ENCODE measurements at regions of chr2 and their contacts with region 1.

Region 1: DNA sequence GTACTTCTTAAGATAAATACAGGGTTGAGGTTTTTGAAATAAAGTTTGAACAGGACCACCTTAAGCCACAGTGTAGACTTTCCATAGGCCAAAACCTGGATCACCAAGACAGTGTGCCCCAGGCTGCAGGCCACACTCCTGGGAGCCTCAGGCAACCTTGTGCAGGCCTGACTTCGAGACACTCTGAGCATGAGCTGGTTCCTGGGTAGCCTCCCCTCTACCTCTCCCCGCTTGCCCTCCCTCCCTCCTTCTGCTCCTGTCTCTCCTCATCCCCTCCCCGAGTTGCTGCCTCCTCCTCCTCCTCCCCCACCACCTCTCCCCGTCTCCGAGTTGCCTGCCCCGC is 10.6 kb upstream of the PROC start:
- DNase-seq: no peak
- ATAC-seq: peak; percentile 57 to 73
- H3K4me3 ChIP-seq: no peak overlapping the region
- H3K27ac ChIP-seq: peak overlapping the region; percentile 97
- H3K4me1 ChIP-seq: peaks cover 66% of the 10 kb centered on the region
- CTCF ChIP-seq: no peak
- EP300 ChIP-seq: no peak
- POLR2A ChIP-seq: no peak
- RAD21 ChIP-seq: no peak

Region 2: GRCh38 chr2:127365211-127365643 is 42.4 kb before region 1 on chr2:
- CTCF ChIA-PET with region 1: no interaction called
- POLR2A ChIA-PET with region 1: no interaction called
- DNase-seq: no peak
- ATAC-seq: peak; percentile 50 to 75; a peak in 4 of 6 replicates
- H3K4me3 ChIP-seq: no peak overlapping the region
- H3K27ac ChIP-seq: no peak overlapping the region
- H3K4me1 ChIP-seq: peaks cover 45% of the 10 kb centered on the region
- CTCF ChIP-seq: no peak
- EP300 ChIP-seq: no peak
- POLR2A ChIP-seq: no peak
- RAD21 ChIP-seq: no peak

Region 3: DNA sequence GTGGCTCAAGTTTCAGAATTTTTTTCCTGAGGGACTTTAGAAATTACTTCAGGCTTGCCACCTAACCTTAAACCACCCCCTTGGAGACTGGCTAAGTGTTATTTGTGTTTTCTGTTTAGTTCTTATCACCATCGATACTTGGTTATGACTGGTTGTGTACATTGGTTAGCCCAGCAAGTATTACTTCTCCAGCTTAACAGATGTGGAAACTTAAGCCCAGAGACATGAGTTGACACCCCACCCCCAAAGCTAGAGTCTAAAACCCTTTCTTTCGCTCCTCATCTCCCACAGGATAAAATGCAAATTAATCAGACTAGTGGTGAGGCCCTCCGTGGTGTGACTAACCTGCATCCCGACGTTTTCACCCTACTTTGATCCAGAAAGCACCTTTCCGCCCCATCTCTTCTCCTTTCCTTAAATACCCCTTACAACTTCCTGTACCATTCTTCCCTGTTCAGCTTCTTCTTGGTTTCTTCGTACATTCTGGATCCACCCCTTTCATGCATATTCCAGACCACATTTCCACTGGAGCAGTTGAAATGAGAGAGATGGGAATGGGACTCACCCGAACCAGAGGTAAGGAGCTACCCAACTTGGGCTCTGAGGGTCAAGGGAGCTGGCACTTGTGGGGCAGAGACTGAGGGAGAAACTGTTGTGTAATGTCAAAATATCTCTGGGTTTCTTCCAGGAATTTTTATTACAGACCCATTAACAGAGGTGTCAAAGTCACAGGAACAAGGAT is 19.0 kb before region 1 on chr2:
- CTCF ChIA-PET with region 1: interaction called, 10 read pairs
- POLR2A ChIA-PET with region 1: interaction called, 7 read pairs
- DNase-seq: no peak
- ATAC-seq: peak in 1 of 2 experiments; percentile 3; a peak in 3 of 6 replicates
- H3K4me3 ChIP-seq: peak overlapping the region; percentile 38
- H3K27ac ChIP-seq: peak overlapping the region; percentile 82 to 99
- H3K4me1 ChIP-seq: peaks cover 45% of the 10 kb centered on the region
- CTCF ChIP-seq: no peak
- EP300 ChIP-seq: no peak
- POLR2A ChIP-seq: no peak
- RAD21 ChIP-seq: no peak

Region 4: DNA sequence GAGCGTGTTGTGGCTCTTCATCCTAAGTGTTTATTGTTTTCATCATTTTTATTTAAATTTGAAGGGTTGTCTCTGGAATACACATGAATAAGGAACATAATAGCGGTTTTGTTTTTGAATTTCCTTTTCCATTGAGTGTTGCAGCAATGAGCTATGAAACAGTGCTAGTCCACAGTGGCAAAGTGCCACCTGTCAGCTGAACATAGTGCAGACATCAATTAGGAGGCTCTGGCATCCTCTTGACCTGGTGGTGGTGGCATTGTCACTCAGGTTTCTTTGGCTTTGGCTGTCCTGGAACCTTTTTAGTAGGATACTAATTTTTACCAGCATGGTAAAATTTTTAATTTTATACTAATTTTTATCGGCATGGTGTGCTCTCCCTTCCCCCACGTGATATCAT is 746.6 kb after region 1 on chr2:
- CTCF ChIA-PET with region 1: no interaction called
- POLR2A ChIA-PET with region 1: no interaction called
- DNase-seq: no peak
- ATAC-seq: no peak
- H3K4me3 ChIP-seq: no peak overlapping the region
- H3K27ac ChIP-seq: no peak overlapping the region
- H3K4me1 ChIP-seq: no peaks in the 10 kb centered on the region
- CTCF ChIP-seq: no peak
- EP300 ChIP-seq: no peak
- POLR2A ChIP-seq: no peak
- RAD21 ChIP-seq: no peak